Activated CD8-positive, alpha-beta T cell treated with anti-CD3 and anti-CD28 coated beads for 36 hours (primary cell): ENCODE measurements at regions of chr4 and their contacts with region 1.

Region 1: DNA sequence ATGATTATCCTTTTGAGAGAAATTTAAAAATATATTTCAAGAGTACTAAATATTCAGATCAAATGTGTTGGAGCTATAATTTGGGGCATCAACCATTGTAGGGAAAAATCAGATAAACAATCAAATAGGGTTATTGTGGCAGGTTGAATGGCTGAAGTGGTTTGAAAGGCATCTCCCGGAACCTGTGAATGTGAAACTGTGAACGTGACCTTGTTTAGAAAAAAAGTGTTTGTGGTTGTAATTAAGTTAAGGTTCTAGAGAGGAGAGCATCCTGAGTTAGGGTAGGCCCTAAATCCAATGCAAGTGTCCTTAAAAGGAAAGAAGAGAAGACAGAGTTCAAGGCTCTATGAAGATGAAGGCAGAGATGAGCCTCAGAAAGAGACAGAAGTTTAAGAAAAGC is 37.4 kb downstream of the ADGRA3 start:
- DNase-seq: no peak
- ATAC-seq: peak; percentile 60
- H3K4me3 Mint-ChIP-seq: no peak overlapping the region
- H3K27ac Mint-ChIP-seq: peak overlapping the region; percentile 32
- H3K4me1 Mint-ChIP-seq: peaks cover 22% of the 10 kb centered on the region
- H3K27me3 Mint-ChIP-seq: no peaks in the 10 kb centered on the region
- CTCF ChIP-seq: no peak

Region 2: GRCh38 chr4:22493523-22493922 is 15.1 kb after region 1 on chr4:
- CTCF ChIA-PET with region 1: no interaction called
- POLR2A ChIA-PET with region 1: no interaction called
- intact Hi-C with region 1: loop called (anchors 1 kb)
- DNase-seq: no peak
- ATAC-seq: no peak
- H3K4me3 Mint-ChIP-seq: no peak overlapping the region
- H3K27ac Mint-ChIP-seq: no peak overlapping the region
- H3K4me1 Mint-ChIP-seq: no peaks in the 10 kb centered on the region
- H3K27me3 Mint-ChIP-seq: no peaks in the 10 kb centered on the region
- CTCF ChIP-seq: no peak

Region 3: DNA sequence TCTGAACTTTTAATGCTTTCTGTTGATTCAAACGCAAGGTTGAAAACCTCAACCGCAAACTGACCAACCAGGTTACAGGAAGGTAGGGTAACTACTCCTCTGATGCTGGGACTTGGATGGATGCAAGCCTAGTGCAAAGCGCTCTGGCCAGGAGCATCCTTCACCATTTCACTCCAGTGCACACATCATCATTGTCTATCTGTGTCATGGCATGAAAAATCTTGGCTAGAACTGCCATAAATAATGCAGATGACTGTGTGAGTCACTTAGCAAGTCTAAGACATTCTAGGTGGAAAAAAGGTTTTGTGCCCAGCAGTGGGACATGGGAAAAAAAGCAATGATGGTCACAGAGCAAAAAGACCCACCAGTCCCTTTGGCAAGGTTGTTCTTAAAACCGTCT is 26.5 kb after region 1 on chr4:
- CTCF ChIA-PET with region 1: no interaction called
- POLR2A ChIA-PET with region 1: no interaction called
- intact Hi-C with region 1: no loop called
- DNase-seq: no peak
- ATAC-seq: no peak
- H3K4me3 Mint-ChIP-seq: no peak overlapping the region
- H3K27ac Mint-ChIP-seq: no peak overlapping the region
- H3K4me1 Mint-ChIP-seq: peaks cover 30% of the 10 kb centered on the region
- H3K27me3 Mint-ChIP-seq: no peaks in the 10 kb centered on the region
- CTCF ChIP-seq: no peak